WTC11 (cell line): ENCODE measurements at regions of chr7 and their contacts with region 1.

Region 1: GRCh38 chr7:69334676-69335075 is 263.6 kb upstream of the AUTS2 start:
- DNase-seq: no peak
- ATAC-seq: no peak
- H3K4me3 Mint-ChIP-seq: no peak overlapping the region
- H3K27ac Mint-ChIP-seq: no peak overlapping the region
- H3K4me1 Mint-ChIP-seq: 0 out of 2 replicates have a peak, but pooled peaks cover 3% of the 10 kb centered on the region
- H3K27me3 Mint-ChIP-seq: peaks cover 7% of the 10 kb centered on the region; the same call in 1 of the 2 replicates
- CTCF ChIP-seq: no peak

Region 2: GRCh38 chr7:69047151-69047754 is 287.4 kb before region 1 on chr7:
- CTCF ChIA-PET with region 1: no interaction called
- POLR2A ChIA-PET with region 1: interaction called, 11 read pairs
- DNase-seq: no peak
- ATAC-seq: no peak
- H3K4me3 Mint-ChIP-seq: no peak overlapping the region
- H3K27ac Mint-ChIP-seq: no peak overlapping the region
- H3K4me1 Mint-ChIP-seq: peaks cover 13% of the 10 kb centered on the region
- H3K27me3 Mint-ChIP-seq: no peaks in the 10 kb centered on the region
- CTCF ChIP-seq: no peak